ENCODE measurements at regions of chr13 and their contacts with region 1.

Region 1: DNA sequence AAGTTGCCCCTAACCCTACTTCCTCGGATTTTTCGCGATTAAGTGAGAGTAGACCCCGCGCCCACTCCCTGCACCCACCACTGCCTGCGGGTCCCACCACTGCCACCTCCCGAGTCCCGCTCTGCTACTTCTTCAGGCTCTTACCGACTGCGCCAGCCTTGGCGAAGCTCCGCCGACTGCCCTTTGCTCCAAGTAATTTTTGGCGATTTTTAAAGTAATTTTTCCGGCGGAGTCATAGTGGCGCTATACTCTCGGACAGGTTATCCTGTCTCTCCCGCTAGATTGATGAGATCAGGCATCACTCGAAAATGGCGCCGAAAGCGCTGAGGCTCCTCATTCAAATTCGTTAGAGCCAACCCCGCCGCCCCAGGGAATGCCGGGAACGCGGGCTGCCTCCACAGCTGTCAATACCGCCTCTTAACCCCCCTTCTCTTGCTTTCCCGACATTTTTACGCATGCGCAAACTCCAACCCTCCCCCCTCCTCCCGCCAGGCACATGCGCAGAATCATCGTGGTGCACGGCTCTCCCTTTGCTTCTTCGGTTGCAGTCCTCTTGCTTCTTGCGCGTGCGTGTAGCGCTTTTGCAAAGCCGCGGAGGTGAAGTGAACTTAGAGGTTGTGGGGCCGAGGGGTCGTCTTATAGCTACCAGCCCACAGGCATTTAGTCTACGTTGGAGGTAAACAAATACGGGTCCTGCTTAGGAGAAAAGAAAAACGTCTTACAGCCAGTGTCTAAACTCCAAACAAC is 66.6 kb downstream of the KCNRG start:
- DNase-seq: peak; percentile 94
- CTCF ChIP-seq: peak; percentile 3

Region 2: DNA sequence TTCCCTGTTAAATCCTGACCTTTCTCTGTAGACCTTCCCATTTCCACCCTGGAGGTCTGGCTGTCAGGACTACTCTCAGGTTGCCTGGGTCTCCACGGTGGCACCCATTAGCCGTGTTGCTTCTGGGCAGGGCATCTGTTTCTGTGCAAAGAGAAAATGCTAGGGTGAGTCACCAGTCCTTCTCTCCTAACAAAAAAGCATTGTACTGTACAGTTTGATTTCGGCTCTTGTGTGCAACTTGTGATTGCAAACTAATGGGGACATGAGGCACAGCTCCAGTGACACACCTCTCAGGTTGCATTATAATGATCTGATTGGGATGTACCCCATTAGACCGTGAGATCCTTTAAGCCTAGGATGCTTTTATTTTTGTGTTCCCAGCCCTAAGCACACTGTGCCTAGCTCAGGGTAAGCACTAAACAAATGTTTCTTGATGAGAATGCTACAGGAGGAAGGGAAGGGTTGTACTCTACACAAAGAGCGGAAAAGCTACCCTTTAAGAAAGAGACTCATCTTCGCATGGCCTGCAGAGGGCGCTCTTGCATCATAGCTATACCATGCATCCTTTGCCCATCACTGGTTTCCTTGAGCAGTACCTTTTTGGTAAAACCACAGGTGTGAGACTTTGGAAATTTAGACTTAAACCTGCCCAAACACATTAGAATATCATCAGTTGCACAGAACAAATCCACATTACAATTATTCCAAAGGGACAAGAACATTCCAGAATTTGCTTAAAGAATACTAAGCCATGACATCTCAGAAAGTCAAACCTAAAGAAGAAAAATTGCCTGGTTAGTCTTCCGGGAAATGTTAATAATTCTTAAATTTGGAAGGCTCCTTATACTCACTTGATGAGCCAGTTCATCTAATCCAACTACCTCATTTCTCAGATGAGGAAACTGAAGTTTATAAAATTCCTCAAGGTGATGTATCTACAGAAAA is 105.3 kb before region 1 on chr13:
- CTCF ChIA-PET with region 1: interaction called, 18 read pairs
- POLR2A ChIA-PET with region 1: no interaction called
- DNase-seq: peak; percentile 74
- CTCF ChIP-seq: peak; percentile 78

Region 3: DNA sequence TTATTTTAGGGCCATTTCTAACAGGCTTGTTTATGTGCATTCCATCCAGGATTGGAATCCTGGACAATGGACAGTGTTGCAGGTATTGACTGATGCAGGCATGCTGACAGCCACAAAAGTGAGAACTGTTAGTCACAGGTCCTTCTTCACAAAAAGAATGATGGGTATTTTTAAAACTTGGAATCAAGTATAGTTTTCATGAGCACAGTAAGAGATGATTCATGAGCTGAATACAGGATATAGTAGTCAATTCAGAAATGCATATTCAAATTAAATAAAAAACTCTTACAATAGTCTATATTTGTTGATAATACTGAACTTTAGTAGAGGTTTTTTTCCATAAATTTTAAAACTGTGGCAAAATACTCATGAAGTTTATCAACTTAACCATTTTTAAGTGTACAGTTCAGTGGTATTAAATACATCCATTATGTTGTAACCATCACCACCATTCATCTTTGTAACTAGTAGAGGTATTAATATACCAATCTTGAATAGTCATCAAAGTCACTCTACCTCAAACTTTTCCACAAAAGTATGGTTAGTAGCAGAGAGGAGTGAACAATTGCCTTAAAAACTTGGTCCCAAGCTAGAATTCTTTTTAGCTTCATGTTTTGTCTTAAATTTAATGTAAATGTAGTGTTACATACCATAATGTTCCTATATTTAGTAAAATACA is 12.9 kb after region 1 on chr13:
- CTCF ChIA-PET with region 1: interaction called, 13 read pairs
- POLR2A ChIA-PET with region 1: no interaction called
- DNase-seq: no peak
- CTCF ChIP-seq: no peak

Region 4: DNA sequence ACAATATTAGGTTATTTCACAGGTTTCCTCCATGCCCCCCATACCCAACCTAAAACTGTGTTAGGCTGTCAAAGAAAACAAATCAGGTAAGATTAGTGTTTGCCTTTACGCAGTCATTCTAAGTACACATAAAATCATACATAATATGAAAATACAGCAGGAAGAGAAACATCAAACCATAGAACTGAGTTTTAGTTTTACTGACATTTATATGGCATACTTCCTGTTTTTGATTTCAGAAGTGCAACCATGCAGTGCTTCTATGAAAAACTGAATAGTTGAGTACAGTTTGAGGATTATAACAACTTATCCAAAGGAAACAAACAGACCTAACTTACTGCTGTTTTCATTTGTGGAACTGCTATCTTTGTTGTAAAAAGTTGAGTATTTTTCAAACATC is 24.7 kb after region 1 on chr13:
- CTCF ChIA-PET with region 1: interaction called, 14 read pairs
- POLR2A ChIA-PET with region 1: interaction called, 7 read pairs
- DNase-seq: peak; percentile 39
- CTCF ChIP-seq: no peak

Region 5: DNA sequence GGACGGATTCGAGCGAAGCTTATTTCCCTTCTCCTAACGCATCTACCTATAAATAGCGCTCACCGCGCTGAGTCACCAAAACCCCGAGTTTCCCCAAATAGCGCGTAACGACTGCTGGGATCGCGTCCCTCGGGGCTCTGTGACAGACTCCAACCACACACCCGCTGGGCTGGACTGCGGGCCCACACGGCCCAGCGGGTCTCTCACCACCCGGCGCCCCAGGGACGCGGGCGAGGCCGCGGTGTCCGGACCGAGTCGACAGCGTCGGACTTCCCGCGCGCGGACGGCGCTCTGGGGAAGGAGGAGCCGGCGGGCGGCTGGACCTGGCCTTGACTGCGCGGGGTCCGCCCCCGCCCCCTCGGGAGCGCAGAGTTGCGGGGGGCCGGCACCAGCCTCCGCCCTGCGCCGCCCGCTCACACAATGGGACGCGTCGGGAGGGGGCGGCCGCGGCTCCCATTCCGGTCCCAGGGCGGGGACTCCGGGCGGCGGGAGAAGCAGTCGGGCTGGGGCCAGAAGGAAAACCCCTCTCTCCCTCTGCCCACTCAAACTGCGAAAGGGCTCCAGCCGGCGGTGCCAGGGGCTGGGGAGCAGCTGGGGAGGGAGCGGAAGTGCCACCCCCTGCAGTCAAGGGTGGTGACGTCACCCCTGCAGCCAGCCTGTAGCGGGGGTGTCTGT is 42.1 kb after region 1 on chr13:
- CTCF ChIA-PET with region 1: interaction called, 31 read pairs
- POLR2A ChIA-PET with region 1: interaction called, 4 read pairs
- DNase-seq: peak; percentile 93
- CTCF ChIP-seq: peak; percentile 12

Region 6: DNA sequence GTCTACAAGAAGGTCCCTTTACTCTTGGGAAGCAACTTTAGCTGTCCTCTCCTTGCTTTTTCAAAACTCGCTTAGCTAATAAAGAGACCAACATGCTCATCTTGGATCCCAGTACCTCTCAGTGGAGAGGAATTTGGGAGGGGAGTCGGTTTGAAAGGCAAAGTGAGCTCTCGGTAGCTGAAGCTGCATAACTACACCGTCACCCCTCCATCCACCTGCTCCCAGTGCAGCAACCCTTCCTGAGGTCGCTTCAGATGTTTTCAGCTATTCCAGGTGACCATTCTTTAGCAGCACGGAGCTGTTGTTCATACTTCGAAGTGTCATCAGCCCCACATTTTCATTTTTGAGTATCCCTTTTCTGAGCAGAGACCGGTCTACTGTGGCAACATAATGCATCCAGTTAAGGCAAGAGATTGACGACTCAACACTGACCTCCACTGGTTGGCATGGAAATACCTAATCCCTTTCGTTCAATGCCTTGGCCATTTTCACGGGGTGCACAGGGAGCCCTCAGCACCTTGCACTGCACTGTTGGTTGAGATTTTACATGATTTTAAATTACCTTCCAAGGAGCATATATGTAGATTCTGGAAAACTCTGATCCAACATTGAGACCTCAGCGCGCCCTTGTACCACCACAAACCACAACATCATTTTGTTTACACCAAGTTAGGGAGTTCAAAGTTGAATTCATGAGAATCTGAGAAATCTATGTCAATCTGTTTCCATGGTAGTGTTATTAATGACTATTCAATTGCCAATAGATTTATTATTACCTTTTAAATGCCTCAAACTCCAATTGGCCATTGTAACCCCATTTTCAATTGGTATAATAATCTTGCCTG is 719.5 kb after region 1 on chr13:
- CTCF ChIA-PET with region 1: interaction called, 19 read pairs
- POLR2A ChIA-PET with region 1: no interaction called
- DNase-seq: peak; percentile 58
- CTCF ChIP-seq: peak; percentile 80